Lower leg skin (tissue), 4 donors: ENCODE measurements at regions of chr18 and their contacts with region 1.

Region 1: DNA sequence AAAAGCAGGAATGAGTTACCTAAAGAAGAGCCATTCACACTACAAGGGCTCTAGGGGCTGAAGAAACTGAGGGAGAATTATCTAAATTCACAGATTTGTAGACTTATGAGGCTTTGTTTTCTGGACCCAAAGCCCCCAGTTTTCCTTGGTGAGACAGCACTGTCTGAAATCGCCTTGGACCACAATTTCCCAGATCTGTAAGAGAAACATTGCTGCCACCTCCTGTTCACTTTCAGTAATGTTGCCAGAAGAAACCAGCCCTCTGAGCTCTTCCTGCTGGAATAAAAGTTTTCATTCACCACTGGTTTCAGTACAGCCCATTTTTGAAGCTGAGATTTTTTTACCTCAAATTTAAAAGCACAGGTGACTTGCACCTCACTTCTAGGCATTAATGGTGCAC is 169.2 kb downstream of the CDH20 start:
- DNase-seq: peak in 1 of 2 donors; percentile 33
- H3K4me3 ChIP-seq: no peak overlapping the region
- CTCF ChIP-seq: no peak
- POLR2A ChIP-seq: no peak

Region 2: DNA sequence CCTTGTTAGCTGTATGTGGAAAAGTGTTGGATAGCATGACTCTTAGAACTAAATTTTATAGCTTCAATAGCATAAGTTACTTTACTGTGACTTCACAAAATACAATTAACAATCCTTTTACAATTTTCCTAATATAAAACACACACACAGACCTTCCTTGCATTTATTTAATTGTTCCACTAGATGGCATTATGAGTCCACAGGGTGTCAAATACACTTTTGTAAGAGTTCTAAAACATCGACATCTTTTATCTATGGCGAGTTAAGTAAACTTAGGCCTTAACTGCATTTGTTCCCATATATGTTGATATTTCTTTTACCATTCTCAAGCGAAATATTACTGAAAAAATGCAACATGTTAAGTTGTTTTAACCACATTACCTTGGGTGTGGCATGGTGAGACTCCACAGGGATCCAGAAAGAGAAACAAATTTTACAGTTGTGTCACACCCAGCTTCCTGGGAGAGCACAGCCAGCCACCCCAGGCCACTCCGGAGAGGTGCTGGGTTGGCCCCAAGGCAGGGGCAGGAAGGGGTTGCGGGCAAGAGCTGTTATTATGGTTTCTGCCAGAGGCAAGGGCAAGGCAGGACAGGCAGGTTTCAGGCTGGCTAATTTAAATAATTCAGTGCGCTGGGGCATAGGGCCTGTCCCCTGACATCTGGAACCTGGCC is 817.5 kb before region 1 on chr18:
- intact Hi-C with region 1: loop called (anchors 10 kb)
- DNase-seq: no peak
- H3K4me3 ChIP-seq: no peak overlapping the region
- CTCF ChIP-seq: no peak
- POLR2A ChIP-seq: no peak